ENCODE measurements at regions of chr22 and their contacts with region 1.

Region 1: GRCh38 chr22:46035742-46036557 is 59.0 kb upstream of the WNT7B start:
- DNase-seq: peak; percentile 99 to 100 (median 100)
- ATAC-seq: peak; percentile 95
- H3K4me3 ChIP-seq: peak overlapping the region; percentile 91
- H3K4me3 Mint-ChIP-seq: peak overlapping the region; percentile 80 to 92 (median 86)
- H3K27ac ChIP-seq: peak overlapping the region; percentile 98
- H3K27ac Mint-ChIP-seq: peak overlapping the region; percentile 87 to 97 (median 95)
- H3K4me1 ChIP-seq: peaks cover 17 to 18% of the 10 kb centered on the region in 2 donors
- H3K4me1 Mint-ChIP-seq: peaks cover 5 to 31% (median 21%) of the 10 kb centered on the region in 7 donors
- H3K27me3 ChIP-seq: no peaks in the 10 kb centered on the region
- H3K27me3 Mint-ChIP-seq: no peaks in the 10 kb centered on the region

Region 2: DNA sequence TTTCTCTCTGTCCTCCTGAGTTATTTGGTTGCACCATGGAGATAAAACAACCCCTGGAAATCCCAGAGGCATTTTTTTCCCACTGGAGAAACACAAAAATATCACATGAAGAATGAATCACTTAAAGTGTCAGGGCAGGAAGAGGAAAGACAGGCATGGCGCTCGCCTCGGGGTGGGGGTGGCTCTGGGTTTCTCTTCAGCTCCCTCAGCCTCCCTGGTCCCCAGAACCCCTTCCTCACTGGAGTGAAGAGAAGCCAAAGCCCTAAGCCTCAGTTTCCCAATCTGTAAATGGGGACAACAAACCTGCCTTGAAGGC is 1724.1 kb before region 1 on chr22:
- CTCF ChIA-PET with region 1: no interaction called
- POLR2A ChIA-PET with region 1: no interaction called
- intact Hi-C with region 1: no loop called
- DNase-seq: no peak
- ATAC-seq: no peak
- H3K4me3 ChIP-seq: no peak overlapping the region
- H3K4me3 Mint-ChIP-seq: no peak overlapping the region
- H3K27ac ChIP-seq: no peak overlapping the region
- H3K27ac Mint-ChIP-seq: no peak overlapping the region
- H3K4me1 ChIP-seq: peaks cover 0 to 8% of the 10 kb centered on the region in 2 donors
- H3K4me1 Mint-ChIP-seq: peaks cover 0 to 10% (median 6%) of the 10 kb centered on the region in 7 donors
- H3K27me3 ChIP-seq: no peaks in the 10 kb centered on the region
- H3K27me3 Mint-ChIP-seq: no peaks in the 10 kb centered on the region

Region 3: GRCh38 chr22:44497218-44497904 is 1538.6 kb before region 1 on chr22:
- CTCF ChIA-PET with region 1: no interaction called
- POLR2A ChIA-PET with region 1: no interaction called
- intact Hi-C with region 1: loop called in 1 of 2 experiments (anchors 5 kb)
- DNase-seq: peak in 2 of 9 donors; percentile 8 to 11
- ATAC-seq: no peak
- H3K4me3 ChIP-seq: peak overlapping the region; percentile 61
- H3K4me3 Mint-ChIP-seq: peak overlapping the region; percentile 42 to 89 (median 72)
- H3K27ac ChIP-seq: peak overlapping the region; percentile 80
- H3K27ac Mint-ChIP-seq: peak overlapping the region; percentile 15 to 91 (median 73)
- H3K4me1 ChIP-seq: peaks cover 4 to 28% of the 10 kb centered on the region in 2 donors
- H3K4me1 Mint-ChIP-seq: peaks cover 5 to 47% (median 29%) of the 10 kb centered on the region in 7 donors
- H3K27me3 ChIP-seq: no peaks in the 10 kb centered on the region
- H3K27me3 Mint-ChIP-seq: peaks cover 0 to 9% (median 5%) of the 10 kb centered on the region in 5 donors

Region 4: GRCh38 chr22:45318168-45318557 is 717.8 kb before region 1 on chr22:
- CTCF ChIA-PET with region 1: no interaction called
- POLR2A ChIA-PET with region 1: no interaction called
- intact Hi-C with region 1: loop called in 1 of 2 experiments (anchors 1 kb)
- DNase-seq: peak; percentile 72 to 98 (median 96)
- ATAC-seq: peak; percentile 79
- H3K4me3 ChIP-seq: peak overlapping the region; percentile 49
- H3K4me3 Mint-ChIP-seq: peak overlapping the region; percentile 72 to 88 (median 85)
- H3K27ac ChIP-seq: peak overlapping the region; percentile 92
- H3K27ac Mint-ChIP-seq: peak overlapping the region; percentile 98 to 100 (median 99)
- H3K4me1 ChIP-seq: peaks cover 32 to 59% of the 10 kb centered on the region in 2 donors
- H3K4me1 Mint-ChIP-seq: peaks cover 32 to 100% (median 90%) of the 10 kb centered on the region in 7 donors
- H3K27me3 ChIP-seq: no peaks in the 10 kb centered on the region
- H3K27me3 Mint-ChIP-seq: no peaks in the 10 kb centered on the region

Region 5: DNA sequence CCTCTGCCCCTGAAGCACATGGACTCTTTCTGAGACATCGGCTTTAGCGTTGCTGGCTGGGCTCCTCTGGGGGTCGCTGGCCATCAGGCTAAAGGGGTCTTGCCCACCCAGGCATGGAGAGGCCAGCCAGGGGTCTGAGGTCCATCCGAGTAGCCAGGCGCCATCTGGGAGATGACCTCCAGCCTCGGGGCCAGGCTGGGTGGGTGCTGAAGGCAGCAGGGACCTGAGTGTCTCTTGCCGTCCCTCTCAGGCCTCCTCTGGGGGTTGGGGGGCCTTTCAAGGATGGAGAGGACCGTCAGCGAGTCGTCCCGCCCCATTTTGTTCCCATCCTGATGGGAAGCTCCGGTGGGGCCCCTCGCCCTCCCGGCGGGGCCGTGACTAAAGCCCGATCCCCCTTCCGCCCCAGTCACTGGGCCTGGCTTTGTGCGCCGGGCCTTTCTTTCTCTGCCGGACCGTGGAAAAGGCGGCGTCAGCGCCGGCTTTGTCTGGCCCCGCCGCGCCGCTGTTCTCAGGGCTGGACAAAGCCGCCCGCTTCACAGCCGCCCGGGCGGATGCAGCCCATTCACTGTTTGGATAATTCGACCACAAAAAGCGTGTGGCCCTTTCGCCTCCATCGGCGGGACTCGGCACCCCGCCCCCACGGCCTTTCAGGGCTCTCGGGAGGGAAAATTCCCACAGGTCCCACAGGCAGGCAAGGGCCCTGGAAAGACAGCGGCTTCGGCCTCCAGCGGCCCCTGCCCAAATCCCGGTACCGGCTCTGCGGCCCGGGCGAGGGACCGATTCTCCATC is 146.5 kb before region 1 on chr22:
- CTCF ChIA-PET with region 1: no interaction called
- POLR2A ChIA-PET with region 1: no interaction called
- intact Hi-C with region 1: no loop called
- DNase-seq: no peak
- ATAC-seq: no peak
- H3K4me3 ChIP-seq: no peak overlapping the region
- H3K4me3 Mint-ChIP-seq: no peak overlapping the region
- H3K27ac ChIP-seq: no peak overlapping the region
- H3K27ac Mint-ChIP-seq: no peak overlapping the region
- H3K4me1 ChIP-seq: no peaks in the 10 kb centered on the region
- H3K4me1 Mint-ChIP-seq: no peaks in the 10 kb centered on the region
- H3K27me3 ChIP-seq: no peaks in the 10 kb centered on the region
- H3K27me3 Mint-ChIP-seq: peaks cover 0 to 19% (median 15%) of the 10 kb centered on the region in 5 donors

Region 6: DNA sequence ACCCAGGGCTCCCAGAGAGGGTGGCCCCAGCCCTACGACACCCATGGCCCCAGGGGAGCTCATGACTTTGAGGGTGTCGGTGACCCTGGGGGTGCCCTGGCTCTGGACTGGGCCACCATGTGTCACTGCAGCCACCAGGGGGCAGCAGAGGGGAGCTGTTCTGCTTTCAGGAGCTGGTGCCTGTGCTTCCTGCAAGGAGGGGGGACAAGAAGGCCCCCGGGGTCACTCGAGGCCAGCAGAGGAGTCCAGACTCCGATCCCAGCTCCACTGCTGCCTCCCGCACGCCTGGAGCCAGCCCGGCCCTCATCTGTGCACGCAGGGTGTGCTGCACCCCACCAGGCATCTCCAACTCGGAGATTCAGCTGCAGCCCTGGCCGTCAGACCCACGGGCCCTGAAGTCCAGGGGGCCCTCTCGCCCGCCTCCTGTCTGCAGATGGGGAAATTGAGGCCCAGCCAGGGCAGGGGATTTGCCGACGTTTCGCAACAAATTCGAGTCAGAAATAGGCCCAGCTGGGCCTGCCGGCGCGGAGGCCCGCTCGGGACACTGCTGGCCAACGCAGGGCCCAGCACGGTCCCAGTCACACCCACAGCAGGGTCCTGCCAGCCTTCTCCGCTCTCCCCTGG is 29.5 kb before region 1 on chr22:
- CTCF ChIA-PET with region 1: interaction called, 76 read pairs
- POLR2A ChIA-PET with region 1: interaction called, 24 read pairs
- intact Hi-C with region 1: loop called (anchors 1 kb)
- DNase-seq: peak; percentile 66 to 90 (median 82)
- ATAC-seq: peak; percentile 90
- H3K4me3 ChIP-seq: no peak overlapping the region
- H3K4me3 Mint-ChIP-seq: no peak overlapping the region
- H3K27ac ChIP-seq: no peak overlapping the region
- H3K27ac Mint-ChIP-seq: peak overlapping the region in 1 of 9 donors; percentile 59
- H3K4me1 ChIP-seq: peaks cover 4 to 5% of the 10 kb centered on the region in 2 donors
- H3K4me1 Mint-ChIP-seq: peaks cover 0 to 12% (median 4%) of the 10 kb centered on the region in 7 donors
- H3K27me3 ChIP-seq: peaks cover 0 to 3% of the 10 kb centered on the region in 2 donors
- H3K27me3 Mint-ChIP-seq: peaks cover 0 to 1% (median 0%) of the 10 kb centered on the region in 5 donors

Region 7: GRCh38 chr22:46071451-46072109 is 35.6 kb after region 1 on chr22:
- CTCF ChIA-PET with region 1: interaction called, 5 read pairs
- POLR2A ChIA-PET with region 1: interaction called, 37 read pairs
- intact Hi-C with region 1: loop called (anchors 1 to 2 kb)
- DNase-seq: peak in 8 of 9 donors; percentile 45 to 77 (median 66)
- ATAC-seq: peak; percentile 44
- H3K4me3 ChIP-seq: peak overlapping the region; percentile 66
- H3K4me3 Mint-ChIP-seq: peak overlapping the region; percentile 82 to 90 (median 86)
- H3K27ac ChIP-seq: peak overlapping the region; percentile 69
- H3K27ac Mint-ChIP-seq: peak overlapping the region in 7 of 9 donors; percentile 57 to 90 (median 74)
- H3K4me1 ChIP-seq: peaks cover 0 to 37% of the 10 kb centered on the region in 2 donors
- H3K4me1 Mint-ChIP-seq: peaks cover 42 to 73% (median 66%) of the 10 kb centered on the region in 7 donors
- H3K27me3 ChIP-seq: no peaks in the 10 kb centered on the region
- H3K27me3 Mint-ChIP-seq: peaks cover 0 to 10% (median 0%) of the 10 kb centered on the region in 5 donors

Region 8: GRCh38 chr22:46250035-46250782 is 214.3 kb after region 1 on chr22 and contains the start of gene CDPF1:
- CTCF ChIA-PET with region 1: no interaction called
- POLR2A ChIA-PET with region 1: interaction called, 3 read pairs
- intact Hi-C with region 1: loop called (anchors 1 kb)
- DNase-seq: peak; percentile 82 to 96 (median 86)
- ATAC-seq: peak; percentile 97
- H3K4me3 ChIP-seq: peak within 1 kb of the TSS; percentile 71
- H3K4me3 Mint-ChIP-seq: peak within 1 kb of the TSS; percentile 74 to 93 (median 83)
- H3K27ac ChIP-seq: peak within 1 kb of the TSS; percentile 77
- H3K27ac Mint-ChIP-seq: peak within 1 kb of the TSS; percentile 51 to 92 (median 77)
- H3K4me1 ChIP-seq: peaks cover 5 to 7% of the 10 kb centered on the region in 2 donors
- H3K4me1 Mint-ChIP-seq: peaks cover 17 to 32% (median 29%) of the 10 kb centered on the region in 7 donors
- H3K27me3 ChIP-seq: no peaks in the 10 kb centered on the region
- H3K27me3 Mint-ChIP-seq: no peaks in the 10 kb centered on the region
- total RNA-seq, gene CDPF1: 4.2 to 13.8 (median 11.7) TPM

Measured in naive thymus-derived CD4-positive, alpha-beta T cell (primary cell).